ENCODE measurements at regions of chr5 and their contacts with region 1.

Region 1: DNA sequence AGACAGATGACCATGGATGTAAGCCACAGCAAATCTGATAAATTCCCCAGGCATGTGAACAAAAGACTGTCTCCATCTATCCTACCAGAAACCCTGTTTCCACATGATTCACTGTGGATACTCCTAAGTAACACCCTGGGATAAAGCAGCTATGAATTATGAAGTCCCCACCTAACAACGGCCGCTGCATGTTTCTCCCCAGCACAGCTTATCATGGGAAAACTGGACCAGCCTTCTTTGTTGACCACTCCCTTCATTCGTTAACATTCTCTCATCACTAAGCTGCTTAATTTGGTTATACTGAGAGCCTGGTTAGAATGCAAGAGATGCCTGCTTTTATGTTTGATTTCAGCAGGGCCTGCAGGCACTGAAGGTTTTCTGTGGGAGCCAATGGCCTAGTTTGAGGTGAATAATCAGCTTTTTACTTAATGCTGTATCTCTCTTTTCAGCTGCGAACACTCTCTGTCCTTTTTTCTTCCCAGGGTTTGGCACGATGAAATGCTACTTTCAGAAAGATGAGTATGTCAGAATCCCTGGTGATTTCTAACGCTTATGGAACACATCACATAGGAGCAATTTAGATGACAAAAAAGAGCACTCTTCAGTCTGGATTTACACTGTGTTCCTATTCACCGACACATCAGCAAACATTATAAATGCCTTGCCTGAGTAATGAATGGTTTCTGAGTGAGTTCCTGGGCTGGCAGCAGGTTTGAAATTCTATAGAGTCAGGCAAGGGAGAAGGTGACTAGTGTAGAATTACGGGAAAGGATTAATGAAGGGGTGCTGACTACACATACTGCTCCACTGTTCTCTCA is 318.4 kb upstream of the ZNF608 start:
- DNase-seq: no peak
- H3K4me3 ChIP-seq: no peak overlapping the region
- H3K27ac ChIP-seq: no peak overlapping the region
- H3K4me1 ChIP-seq: no peaks in the 10 kb centered on the region
- CTCF ChIP-seq: no peak

Region 2: DNA sequence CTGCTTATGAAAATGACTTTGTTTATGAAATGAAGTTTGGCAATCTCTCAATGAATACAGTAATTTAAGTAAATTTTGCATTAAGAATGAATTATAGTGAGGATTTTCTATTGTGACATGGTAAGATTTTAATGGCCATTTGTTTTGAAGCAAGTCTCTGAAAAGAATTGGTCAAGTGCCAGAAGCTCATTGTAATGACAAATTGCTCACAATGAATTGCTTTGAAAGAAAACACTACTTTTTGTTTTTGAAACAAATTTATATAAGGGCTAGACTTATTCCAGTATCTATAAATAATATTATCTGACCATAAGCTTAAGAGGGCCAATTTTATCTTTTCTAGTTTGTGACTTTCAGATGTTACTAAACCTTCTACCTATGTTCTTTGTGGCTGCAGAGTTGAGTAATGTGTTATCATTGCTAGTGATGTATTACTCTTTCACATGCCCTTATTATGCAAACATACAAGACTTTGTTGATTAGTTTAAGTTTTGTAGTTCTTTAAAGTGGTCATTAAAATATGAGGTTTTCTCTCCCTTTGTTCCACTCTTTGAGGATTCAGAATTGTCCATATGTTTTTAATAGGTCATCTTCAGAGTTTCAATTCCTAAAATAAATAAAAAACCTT is 225.3 kb before region 1 on chr5:
- CTCF ChIA-PET with region 1: no interaction called
- POLR2A ChIA-PET with region 1: no interaction called
- intact Hi-C with region 1: no loop called
- DNase-seq: no peak
- H3K4me3 ChIP-seq: no peak overlapping the region
- H3K27ac ChIP-seq: no peak overlapping the region
- H3K4me1 ChIP-seq: no peaks in the 10 kb centered on the region
- CTCF ChIP-seq: no peak

Region 3: GRCh38 chr5:124871303-124871702 is 193.5 kb before region 1 on chr5:
- CTCF ChIA-PET with region 1: no interaction called
- POLR2A ChIA-PET with region 1: interaction called, 11 read pairs
- intact Hi-C with region 1: no loop called
- DNase-seq: no peak
- H3K4me3 ChIP-seq: no peak overlapping the region
- H3K27ac ChIP-seq: no peak overlapping the region
- H3K4me1 ChIP-seq: no peaks in the 10 kb centered on the region
- CTCF ChIP-seq: no peak

Region 4: GRCh38 chr5:125117566-125117965 is 52.7 kb after region 1 on chr5:
- CTCF ChIA-PET with region 1: no interaction called
- POLR2A ChIA-PET with region 1: no interaction called
- intact Hi-C with region 1: no loop called
- DNase-seq: no peak
- H3K4me3 ChIP-seq: no peak overlapping the region
- H3K27ac ChIP-seq: no peak overlapping the region
- H3K4me1 ChIP-seq: peaks cover 9% of the 10 kb centered on the region
- CTCF ChIP-seq: no peak

Region 5: GRCh38 chr5:125277494-125278154 is 212.8 kb after region 1 on chr5:
- CTCF ChIA-PET with region 1: no interaction called
- POLR2A ChIA-PET with region 1: no interaction called
- intact Hi-C with region 1: no loop called
- DNase-seq: no peak
- H3K4me3 ChIP-seq: no peak overlapping the region
- H3K27ac ChIP-seq: no peak overlapping the region
- H3K4me1 ChIP-seq: no peaks in the 10 kb centered on the region
- CTCF ChIP-seq: no peak

Measured in OCI-LY7 (cell line).